Activated CD4-positive, alpha-beta T cell treated with anti-CD3 and anti-CD28 coated beads, Interleukin-2, amount 10 ng/mL, durations not matched to agents 24 days and 14 days (primary cell): ENCODE measurements at regions of chr1 and their contacts with region 1.

Region 1: GRCh38 chr1:12619792-12620487 is 1.9 kb upstream of the DHRS3 start:
- DNase-seq: peak; percentile 94
- H3K4me3 Mint-ChIP-seq: peak overlapping the region; percentile 99
- H3K27ac Mint-ChIP-seq: peak overlapping the region; percentile 75
- H3K4me1 Mint-ChIP-seq: peaks cover 47% of the 10 kb centered on the region
- H3K27me3 Mint-ChIP-seq: no peaks in the 10 kb centered on the region

Region 2: DNA sequence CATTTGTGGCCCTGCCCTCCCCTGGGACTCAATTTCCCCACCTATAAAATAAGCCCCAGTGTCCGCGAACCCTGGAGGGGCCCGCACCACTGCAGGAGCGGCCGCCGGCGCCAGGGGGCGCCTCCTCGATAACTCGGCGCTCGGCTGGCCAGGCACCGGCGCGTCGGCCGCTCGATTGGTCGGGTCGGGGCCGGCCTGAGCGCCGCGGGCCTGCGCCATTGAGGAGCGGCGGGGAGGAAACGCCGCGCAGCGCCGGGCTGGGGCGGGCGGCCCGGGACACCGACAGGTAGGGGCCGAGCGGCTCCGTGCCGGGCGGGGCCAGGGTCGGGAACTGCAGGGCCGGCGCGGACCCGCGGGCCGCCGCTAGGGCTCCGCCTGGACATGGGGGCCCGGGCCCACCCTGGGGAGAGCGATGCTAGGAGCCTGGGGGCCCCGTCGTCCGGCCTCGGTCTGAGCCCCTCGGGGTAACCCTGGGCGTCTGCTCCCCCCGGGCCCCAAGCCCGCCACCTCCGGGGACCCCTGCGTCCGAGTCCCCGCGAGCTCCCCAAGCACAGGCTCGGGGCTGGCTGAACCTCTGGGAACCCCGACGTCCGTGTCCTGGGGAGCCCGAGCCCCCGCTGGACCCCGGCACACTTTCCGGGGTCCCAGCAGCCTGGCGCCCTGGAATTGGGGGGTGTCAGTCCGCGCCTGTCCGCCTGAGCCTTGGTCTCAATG is 389.9 kb before region 1 on chr1 and contains the start of gene VPS13D:
- intact Hi-C with region 1: loop called (anchors 1 kb)
- DNase-seq: peak; percentile 96
- H3K4me3 Mint-ChIP-seq: peak within 1 kb of the TSS; percentile 87
- H3K27ac Mint-ChIP-seq: peak within 1 kb of the TSS; percentile 37
- H3K4me1 Mint-ChIP-seq: peaks cover 8% of the 10 kb centered on the region
- H3K27me3 Mint-ChIP-seq: peaks cover 4% of the 10 kb centered on the region
- total RNA-seq, gene VPS13D: 26.9 and 30.8 TPM in 2 replicates

Region 3: DNA sequence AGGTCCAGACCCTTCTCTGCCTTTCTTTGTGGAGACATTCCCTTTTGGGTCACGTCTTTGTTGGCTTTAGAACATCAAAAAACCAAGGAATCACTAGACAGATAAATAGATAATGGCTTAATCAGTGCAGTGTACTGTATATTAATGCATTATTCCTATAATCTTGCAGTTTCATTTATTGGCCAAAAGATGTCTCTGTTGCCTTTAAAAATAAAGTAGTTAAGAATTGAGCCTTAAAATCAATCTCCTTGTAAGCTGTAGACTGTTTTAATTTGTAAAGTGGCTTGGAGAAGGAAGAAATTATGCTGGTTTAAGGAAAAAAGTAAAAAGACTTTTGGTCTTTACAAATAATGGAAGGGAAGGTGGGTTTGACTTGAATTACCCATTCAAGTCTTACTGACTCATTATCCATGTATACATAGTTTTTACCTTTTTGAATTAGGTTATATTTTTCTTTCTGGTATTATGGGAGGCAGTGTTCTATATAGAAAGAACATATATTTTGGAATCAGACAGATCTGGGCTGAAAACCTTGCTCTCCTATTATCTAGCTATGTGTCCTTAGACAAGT is 305.5 kb before region 1 on chr1:
- intact Hi-C with region 1: loop called (anchors 1 kb)
- DNase-seq: no peak
- H3K4me3 Mint-ChIP-seq: no peak overlapping the region
- H3K27ac Mint-ChIP-seq: no peak overlapping the region
- H3K4me1 Mint-ChIP-seq: no peaks in the 10 kb centered on the region
- H3K27me3 Mint-ChIP-seq: no peaks in the 10 kb centered on the region

Region 4: GRCh38 chr1:12407050-12407961 is 212.6 kb before region 1 on chr1:
- intact Hi-C with region 1: loop called (anchors 1 kb)
- DNase-seq: peak; percentile 73
- H3K4me3 Mint-ChIP-seq: no peak overlapping the region
- H3K27ac Mint-ChIP-seq: no peak overlapping the region
- H3K4me1 Mint-ChIP-seq: peaks cover 17% of the 10 kb centered on the region
- H3K27me3 Mint-ChIP-seq: no peaks in the 10 kb centered on the region

Region 5: GRCh38 chr1:12511516-12512468 is 108.1 kb before region 1 on chr1:
- intact Hi-C with region 1: loop called (anchors 2 kb)
- DNase-seq: peak; percentile 58
- H3K4me3 Mint-ChIP-seq: peak overlapping the region; percentile 82
- H3K27ac Mint-ChIP-seq: peak overlapping the region; percentile 99
- H3K4me1 Mint-ChIP-seq: peaks cover 44% of the 10 kb centered on the region
- H3K27me3 Mint-ChIP-seq: no peaks in the 10 kb centered on the region

Region 6: GRCh38 chr1:12604114-12604874 is 15.6 kb before region 1 on chr1:
- intact Hi-C with region 1: loop called (anchors 1 kb)
- DNase-seq: peak; percentile 83
- H3K4me3 Mint-ChIP-seq: peak overlapping the region; percentile 59
- H3K27ac Mint-ChIP-seq: peak overlapping the region; percentile 80
- H3K4me1 Mint-ChIP-seq: peaks cover 43% of the 10 kb centered on the region
- H3K27me3 Mint-ChIP-seq: no peaks in the 10 kb centered on the region